Posterior vena cava (tissue), 2 donors: ENCODE measurements at regions of chr2 and their contacts with region 1.

Region 1: GRCh38 chr2:104944495-104944894 is 90.6 kb downstream of the POU3F3 start:
- DNase-seq: no peak

Region 2: GRCh38 chr2:104092886-104093285 is 851.6 kb before region 1 on chr2:
- intact Hi-C with region 1: loop called in 1 of 2 experiments (anchors 5 kb)
- DNase-seq: no peak

Region 3: DNA sequence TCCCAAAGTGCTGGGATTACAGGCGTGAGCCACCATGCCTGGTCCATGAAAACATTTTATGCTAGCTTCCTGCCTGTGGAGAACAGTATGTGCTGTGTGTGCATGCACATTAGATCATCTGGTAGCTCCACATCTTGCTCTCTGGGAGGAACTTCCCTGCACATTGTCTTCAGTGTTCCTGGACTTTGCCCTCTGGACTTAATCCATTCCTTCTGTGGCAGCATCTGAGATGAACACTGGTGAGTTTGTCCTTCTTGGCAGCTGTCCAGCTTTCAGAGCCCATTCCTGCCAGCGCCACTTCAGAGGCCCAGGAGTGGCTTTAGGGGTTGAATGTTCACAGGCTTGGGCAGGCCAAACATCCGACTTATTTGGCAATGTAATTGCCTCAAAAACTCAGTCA is 25.4 kb before region 1 on chr2:
- intact Hi-C with region 1: no loop called
- DNase-seq: no peak